Aorta (tissue), 5 donors: ENCODE measurements at regions of chrX and their contacts with region 1.

Region 1: DNA sequence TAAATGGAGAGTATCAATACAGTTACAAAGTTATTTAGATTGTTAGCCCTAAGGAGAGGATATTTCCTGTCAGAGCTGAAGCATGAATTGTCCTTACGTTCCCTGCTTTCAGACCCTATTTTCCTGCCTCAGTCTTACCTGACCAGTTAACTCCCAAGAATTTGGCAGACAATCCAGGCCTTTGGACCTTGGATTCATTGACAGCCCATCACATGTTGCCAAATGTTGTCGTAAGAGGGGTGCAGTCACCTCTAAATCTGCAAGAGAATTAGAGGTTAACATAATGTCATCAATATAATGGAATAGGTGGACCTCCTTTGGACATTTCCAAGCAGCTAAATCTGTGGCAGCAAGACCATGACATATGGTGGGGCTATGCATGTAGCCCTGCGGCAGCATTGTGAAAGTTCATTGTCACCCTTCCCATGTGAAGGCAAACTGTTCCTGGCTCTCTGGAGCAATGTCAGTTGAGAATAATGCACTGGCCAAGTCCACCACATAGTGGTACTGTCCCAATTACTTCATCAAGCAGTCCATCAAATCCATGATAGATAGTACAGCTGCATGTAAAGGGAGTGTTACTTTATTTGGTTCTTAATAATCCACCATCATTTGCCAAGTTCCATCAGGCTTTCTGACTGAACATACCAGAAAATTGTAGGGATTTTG is 1137.0 kb upstream of the POU3F4 start:
- DNase-seq: no peak
- ATAC-seq: no peak
- H3K4me3 ChIP-seq: no peak overlapping the region
- H3K27ac ChIP-seq: no peak overlapping the region
- H3K4me1 ChIP-seq: no peaks in the 10 kb centered on the region
- H3K27me3 ChIP-seq: no peaks in the 10 kb centered on the region

Region 2: DNA sequence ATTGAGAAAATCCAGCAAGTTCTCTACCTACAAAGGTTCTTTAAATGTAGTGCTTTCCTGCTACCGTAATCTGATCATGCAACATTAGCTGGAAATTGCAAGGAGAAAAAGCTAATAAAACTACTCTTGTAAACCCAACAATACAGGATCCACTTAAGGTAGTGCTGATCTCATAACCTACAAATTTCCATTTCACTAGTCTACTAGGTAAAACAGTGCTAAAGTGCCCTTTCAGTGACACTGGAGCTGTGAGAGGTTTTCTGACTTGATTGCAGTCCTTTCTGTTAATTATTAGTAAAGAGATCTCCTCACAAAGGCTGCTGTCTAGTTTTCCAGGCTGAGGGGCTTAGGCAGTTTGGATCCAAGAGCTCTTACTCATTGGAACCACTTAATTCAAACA is 50.6 kb before region 1 on chrX:
- intact Hi-C with region 1: loop called in 1 of 2 experiments (anchors 10 kb)
- DNase-seq: no peak
- ATAC-seq: no peak
- H3K4me3 ChIP-seq: no peak overlapping the region
- H3K27ac ChIP-seq: no peak overlapping the region
- H3K4me1 ChIP-seq: no peaks in the 10 kb centered on the region
- H3K27me3 ChIP-seq: no peaks in the 10 kb centered on the region